Activated CD4-positive, alpha-beta memory T cell treated with anti-CD3 and anti-CD28 coated beads, Interleukin-2, amount 10 ng/mL, durations not matched to agents 7 days and 5 days (primary cell): ENCODE measurements at regions of chr13 and their contacts with region 1.

Region 1: DNA sequence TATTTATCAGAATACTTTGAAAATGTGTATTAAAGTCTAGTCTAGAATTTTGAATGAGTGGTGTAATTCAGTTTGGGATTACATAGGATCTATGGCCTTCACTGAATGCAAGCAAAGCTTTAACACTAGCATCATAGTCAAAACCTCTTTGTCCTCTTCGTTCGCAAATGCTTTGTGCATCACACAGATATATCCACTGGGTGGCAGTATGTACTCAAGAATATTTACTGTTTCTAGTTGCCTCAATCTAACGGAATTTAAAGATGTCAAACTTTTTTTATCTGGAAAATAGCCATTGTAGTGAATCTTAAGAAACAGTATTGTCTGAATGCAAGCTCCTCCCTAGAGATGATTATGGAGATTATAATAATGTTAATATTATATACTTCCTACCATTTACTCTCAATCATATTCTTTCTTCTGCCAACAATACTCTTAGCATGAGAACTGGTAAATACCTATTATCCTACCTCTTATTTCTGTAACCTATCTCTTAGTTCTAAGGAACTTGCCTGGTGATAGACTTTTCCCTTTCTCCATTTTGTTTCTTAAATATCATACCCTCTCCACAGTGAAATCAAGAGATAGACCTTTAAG is 25.8 kb downstream of the LACC1 start:
- DNase-seq: peak; percentile 19
- H3K4me3 Mint-ChIP-seq: no peak overlapping the region
- H3K27ac Mint-ChIP-seq: no peak overlapping the region
- H3K4me1 Mint-ChIP-seq: no peaks in the 10 kb centered on the region
- H3K27me3 Mint-ChIP-seq: peaks cover 18% of the 10 kb centered on the region

Region 2: DNA sequence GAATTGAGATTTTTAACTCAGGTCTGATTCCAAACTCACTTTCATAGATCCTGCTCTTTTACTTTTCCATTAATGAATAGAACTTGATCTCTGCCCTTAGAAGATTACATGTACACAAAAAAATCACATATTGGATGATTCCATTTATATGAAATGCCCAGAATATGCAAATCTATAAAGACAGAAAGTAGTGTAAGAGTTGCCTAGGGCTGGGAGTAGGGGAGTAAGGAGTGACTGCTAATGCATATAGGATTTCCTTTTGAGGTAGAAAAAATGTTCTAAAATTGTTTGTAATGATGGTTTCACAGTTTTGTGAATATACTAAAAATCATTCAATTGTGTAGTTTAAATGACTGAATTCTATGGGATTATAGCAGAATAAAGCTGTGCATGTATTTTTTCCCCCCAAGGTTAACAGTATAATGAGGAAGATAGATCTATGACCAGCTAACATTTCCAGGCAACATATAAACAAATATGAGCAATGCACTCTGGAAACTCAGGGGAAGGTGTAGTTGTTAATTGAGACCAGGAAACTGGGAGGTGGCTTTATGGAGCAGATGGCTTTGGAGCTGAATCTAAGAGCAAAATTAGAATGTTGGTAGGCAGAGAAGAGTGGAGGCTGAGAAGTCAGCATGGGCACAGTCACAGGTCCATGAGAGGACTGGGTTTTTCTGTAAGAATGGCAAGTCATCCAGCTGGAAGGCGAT is 15.6 kb after region 1 on chr13:
- CTCF ChIA-PET with region 1: interaction called, 10 read pairs
- POLR2A ChIA-PET with region 1: interaction called, 3 read pairs
- DNase-seq: no peak
- H3K4me3 Mint-ChIP-seq: no peak overlapping the region
- H3K27ac Mint-ChIP-seq: no peak overlapping the region
- H3K4me1 Mint-ChIP-seq: no peaks in the 10 kb centered on the region
- H3K27me3 Mint-ChIP-seq: peaks cover 31% of the 10 kb centered on the region